Heart left ventricle (tissue), 16 donors: ENCODE measurements at regions of chr2 and their contacts with region 1.

Region 1: GRCh38 chr2:61910603-61911002 is 5.1 kb downstream of the COMMD1 start:
- DNase-seq: no peak
- ATAC-seq: no peak
- H3K4me3 ChIP-seq: no peak overlapping the region
- H3K27ac ChIP-seq: no peak overlapping the region
- H3K4me1 ChIP-seq: peaks cover 0 to 45% (median 17%) of the 10 kb centered on the region in 12 donors
- H3K27me3 ChIP-seq: no peaks in the 10 kb centered on the region
- CTCF ChIP-seq: peak in 4 of 12 donors; percentile 16 to 23 (median 17)
- POLR2A ChIP-seq: no peak

Region 2: GRCh38 chr2:61854474-61855182 is 56.0 kb before region 1 on chr2:
- intact Hi-C with region 1: no loop called
- DNase-seq: peak; percentile 84 to 91 (median 89)
- ATAC-seq: peak; percentile 94 to 97 (median 96)
- H3K4me3 ChIP-seq: peak overlapping the region; percentile 55 to 88 (median 71)
- H3K27ac ChIP-seq: peak overlapping the region in 11 of 12 donors; percentile 62 to 87 (median 79)
- H3K4me1 ChIP-seq: peaks cover 0 to 17% (median 7%) of the 10 kb centered on the region in 12 donors
- H3K27me3 ChIP-seq: no peaks in the 10 kb centered on the region
- CTCF ChIP-seq: no peak
- POLR2A ChIP-seq: peak in 1 of 2 donors; percentile 15

Region 3: GRCh38 chr2:61993444-61994024 is 82.9 kb after region 1 on chr2:
- intact Hi-C with region 1: loop called in 5 of 10 experiments (anchors 5 kb)
- DNase-seq: peak in 1 of 5 donors; percentile 19
- ATAC-seq: peak in 3 of 4 donors; percentile 67 to 83 (median 75)
- H3K4me3 ChIP-seq: no peak overlapping the region
- H3K27ac ChIP-seq: no peak overlapping the region
- H3K4me1 ChIP-seq: peaks cover 0 to 25% (median 3%) of the 10 kb centered on the region in 12 donors
- H3K27me3 ChIP-seq: no peaks in the 10 kb centered on the region
- CTCF ChIP-seq: peak; percentile 55 to 86 (median 69)
- POLR2A ChIP-seq: no peak

Region 4: DNA sequence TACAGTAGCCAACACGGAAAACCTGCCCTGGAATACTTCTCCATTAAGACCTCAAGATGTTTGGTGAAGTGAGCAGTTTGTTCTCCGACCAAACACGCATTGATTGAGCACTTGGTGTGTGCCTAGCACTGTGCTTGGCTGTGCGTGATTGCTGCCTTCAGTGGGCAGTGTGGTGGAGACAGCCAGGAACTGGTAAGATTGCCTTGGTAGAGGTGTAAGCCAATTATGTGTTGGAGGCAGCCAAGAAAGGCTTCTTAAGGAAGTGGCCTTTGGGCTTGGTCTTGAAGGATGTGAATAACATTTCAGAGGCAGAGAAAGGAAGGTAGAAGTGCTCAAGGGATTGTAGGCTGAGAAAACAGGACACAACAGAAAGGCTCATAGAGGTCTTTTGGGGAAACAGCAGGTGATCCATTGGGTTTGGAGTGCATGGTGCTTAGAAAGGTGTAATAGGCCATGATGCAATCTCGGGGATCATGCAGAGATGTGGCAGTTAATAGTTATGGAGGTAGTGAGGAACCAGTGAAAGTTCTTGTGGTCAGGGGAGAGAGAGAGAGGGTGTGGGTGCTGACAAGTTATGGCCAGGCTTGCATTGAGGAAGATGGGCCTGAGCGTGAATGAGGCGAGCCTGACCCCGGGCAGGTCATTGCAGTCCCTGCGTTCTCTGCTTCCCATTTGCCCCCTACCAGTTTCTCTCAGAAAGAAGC is 291.6 kb after region 1 on chr2:
- intact Hi-C with region 1: loop called in 4 of 10 experiments (anchors 5 to 10 kb)
- DNase-seq: no peak
- ATAC-seq: peak in 1 of 4 donors; percentile 33
- H3K4me3 ChIP-seq: no peak overlapping the region
- H3K27ac ChIP-seq: peak overlapping the region in 4 of 12 donors; percentile 16 to 37 (median 24)
- H3K4me1 ChIP-seq: peaks cover 0 to 93% (median 66%) of the 10 kb centered on the region in 12 donors
- H3K27me3 ChIP-seq: no peaks in the 10 kb centered on the region
- CTCF ChIP-seq: no peak
- POLR2A ChIP-seq: no peak

Region 5: DNA sequence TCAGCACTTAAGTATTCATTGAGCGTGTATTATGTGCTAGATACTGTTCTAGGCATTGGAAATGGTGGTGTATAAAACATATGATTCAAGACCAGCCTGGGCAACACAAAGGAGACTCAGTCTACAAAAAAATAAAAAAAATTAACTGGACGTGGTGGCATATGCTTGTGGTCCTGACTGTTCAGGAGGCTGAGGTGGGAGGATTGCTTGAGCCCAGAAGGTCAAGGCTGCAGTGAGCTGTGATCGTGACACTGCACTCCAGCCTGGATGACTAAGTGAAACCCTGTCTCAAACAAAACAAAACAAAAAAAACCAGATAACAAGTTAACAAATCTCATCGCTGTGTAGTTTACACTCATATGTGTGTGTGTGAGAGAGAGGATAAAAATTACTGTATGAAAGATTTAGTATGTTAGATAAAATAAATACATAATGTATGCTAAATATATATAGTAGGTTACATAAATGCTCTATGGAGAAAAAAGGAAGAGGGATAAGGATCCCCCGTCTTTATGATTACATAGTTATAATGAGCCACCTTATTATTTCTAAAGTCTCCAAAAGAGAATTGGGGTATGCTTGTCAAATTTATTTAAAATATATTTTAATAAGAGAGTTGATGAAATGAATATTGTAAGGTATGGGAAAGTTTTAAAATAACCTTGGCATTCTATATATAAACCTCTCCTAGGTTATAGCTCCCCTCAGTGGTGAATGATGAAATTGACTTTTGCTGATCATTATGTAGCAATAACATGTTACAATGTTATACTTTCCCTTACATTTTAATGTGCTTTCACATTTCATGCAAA is 864.2 kb after region 1 on chr2:
- intact Hi-C with region 1: loop called in 1 of 10 experiments (anchors 10 kb)
- DNase-seq: no peak
- ATAC-seq: peak in 2 of 4 donors; percentile 52 to 75
- H3K4me3 ChIP-seq: no peak overlapping the region
- H3K27ac ChIP-seq: peak overlapping the region in 1 of 12 donors; percentile 15
- H3K4me1 ChIP-seq: peaks cover 0 to 7% (median 0%) of the 10 kb centered on the region in 12 donors
- H3K27me3 ChIP-seq: no peaks in the 10 kb centered on the region
- CTCF ChIP-seq: peak; percentile 76 to 96 (median 84)
- POLR2A ChIP-seq: no peak